ENCODE measurements at regions of chr7 and their contacts with region 1.

Region 1: GRCh38 chr7:94394399-94395140 is at the start of gene COL1A2:
- DNase-seq: peak in 1 of 2 experiments; percentile 8
- H3K4me3 ChIP-seq: no peak within 1 kb of the TSS
- H3K4me1 ChIP-seq: no peaks in the 10 kb centered on the region
- H3K27me3 ChIP-seq: peaks cover 5% of the 10 kb centered on the region; the same call in 1 of the 2 replicates

Region 2: GRCh38 chr7:94295850-94296249 is 98.7 kb before region 1 on chr7:
- in situ Hi-C with region 1: loop called (anchors 5 kb)
- DNase-seq: peak in 1 of 2 experiments; percentile 49
- H3K4me3 ChIP-seq: no peak overlapping the region
- H3K4me1 ChIP-seq: peaks cover 13% of the 10 kb centered on the region
- H3K27me3 ChIP-seq: peaks cover 9% of the 10 kb centered on the region

Region 3: GRCh38 chr7:95113590-95113989 is 719.0 kb after region 1 on chr7:
- in situ Hi-C with region 1: no loop called
- DNase-seq: no peak
- H3K4me3 ChIP-seq: no peak overlapping the region
- H3K4me1 ChIP-seq: peaks cover 8% of the 10 kb centered on the region
- H3K27me3 ChIP-seq: no peaks in the 10 kb centered on the region

Measured in HAP-1 (cell line).